ENCODE measurements at regions of chr20 and their contacts with region 1.

Region 1: GRCh38 chr20:1357921-1358671 is 29.2 kb upstream of the SDCBP2 start:
- DNase-seq: peak; percentile 60
- H3K4me3 Mint-ChIP-seq: peak overlapping the region; percentile 31
- H3K27ac Mint-ChIP-seq: peak overlapping the region; percentile 77
- H3K4me1 Mint-ChIP-seq: peaks cover 54% of the 10 kb centered on the region
- H3K27me3 Mint-ChIP-seq: no peaks in the 10 kb centered on the region

Region 2: GRCh38 chr20:1263853-1264252 is 94.2 kb before region 1 on chr20:
- CTCF ChIA-PET with region 1: no interaction called
- intact Hi-C with region 1: no loop called
- DNase-seq: no peak
- H3K4me3 Mint-ChIP-seq: peak overlapping the region; percentile 17
- H3K27ac Mint-ChIP-seq: peak overlapping the region; percentile 50
- H3K4me1 Mint-ChIP-seq: peaks cover 43% of the 10 kb centered on the region
- H3K27me3 Mint-ChIP-seq: no peaks in the 10 kb centered on the region

Region 3: GRCh38 chr20:1345030-1345755 is 12.9 kb before region 1 on chr20:
- CTCF ChIA-PET with region 1: no interaction called
- intact Hi-C with region 1: loop called (anchors 1 kb)
- DNase-seq: no peak
- H3K4me3 Mint-ChIP-seq: no peak overlapping the region
- H3K27ac Mint-ChIP-seq: no peak overlapping the region
- H3K4me1 Mint-ChIP-seq: peaks cover 26% of the 10 kb centered on the region
- H3K27me3 Mint-ChIP-seq: no peaks in the 10 kb centered on the region

Region 4: DNA sequence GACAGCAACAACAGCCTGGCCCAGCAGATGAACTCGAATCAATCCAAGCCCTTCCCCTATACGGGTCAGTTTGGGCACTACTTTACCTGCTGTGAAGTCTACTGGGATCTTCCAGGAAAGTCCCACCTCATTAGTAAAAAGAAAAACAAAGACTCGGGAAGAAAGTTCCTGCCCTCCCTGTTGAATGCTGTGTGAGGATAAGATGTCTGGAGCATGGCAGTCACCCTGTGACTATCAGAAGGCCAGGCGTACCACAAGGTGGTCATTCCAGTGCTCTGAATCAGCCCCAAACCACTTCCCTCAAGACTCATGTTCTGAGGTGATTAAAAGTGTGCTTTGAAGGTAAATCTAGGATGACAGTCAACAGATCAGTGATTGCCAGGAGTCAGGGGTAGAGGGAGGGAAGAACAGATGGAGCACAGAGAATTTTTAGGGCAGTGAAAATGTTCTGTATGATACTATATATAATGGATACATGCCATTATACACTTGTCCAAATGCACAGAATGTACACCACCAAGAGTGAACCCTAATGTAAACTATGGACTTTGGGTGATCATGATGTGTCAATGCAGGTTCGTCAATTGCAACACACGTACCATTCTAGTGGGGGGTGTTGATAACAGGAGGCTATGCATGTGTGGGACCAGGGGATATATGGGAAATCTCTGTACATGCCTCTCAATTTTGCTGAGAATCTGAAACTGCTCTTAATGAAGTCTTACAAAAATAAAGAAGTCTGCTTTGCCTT is 20.1 kb after region 1 on chr20:
- CTCF ChIA-PET with region 1: interaction called, 4 read pairs
- intact Hi-C with region 1: loop called (anchors 2 kb)
- DNase-seq: peak; percentile 48
- H3K4me3 Mint-ChIP-seq: no peak overlapping the region
- H3K27ac Mint-ChIP-seq: peak overlapping the region; percentile 89
- H3K4me1 Mint-ChIP-seq: peaks cover 81% of the 10 kb centered on the region
- H3K27me3 Mint-ChIP-seq: no peaks in the 10 kb centered on the region

Region 5: GRCh38 chr20:1446536-1446935 is 88.4 kb after region 1 on chr20:
- CTCF ChIA-PET with region 1: no interaction called
- intact Hi-C with region 1: no loop called
- DNase-seq: no peak
- H3K4me3 Mint-ChIP-seq: no peak overlapping the region
- H3K27ac Mint-ChIP-seq: no peak overlapping the region
- H3K4me1 Mint-ChIP-seq: peaks cover 6% of the 10 kb centered on the region
- H3K27me3 Mint-ChIP-seq: no peaks in the 10 kb centered on the region

Measured in activated naive CD4-positive, alpha-beta T cell treated with anti-CD3 and anti-CD28 coated beads for 36 hours (primary cell).